Mammary epithelial cell (primary cell): ENCODE measurements at regions of chr1 and their contacts with region 1.

Region 1: DNA sequence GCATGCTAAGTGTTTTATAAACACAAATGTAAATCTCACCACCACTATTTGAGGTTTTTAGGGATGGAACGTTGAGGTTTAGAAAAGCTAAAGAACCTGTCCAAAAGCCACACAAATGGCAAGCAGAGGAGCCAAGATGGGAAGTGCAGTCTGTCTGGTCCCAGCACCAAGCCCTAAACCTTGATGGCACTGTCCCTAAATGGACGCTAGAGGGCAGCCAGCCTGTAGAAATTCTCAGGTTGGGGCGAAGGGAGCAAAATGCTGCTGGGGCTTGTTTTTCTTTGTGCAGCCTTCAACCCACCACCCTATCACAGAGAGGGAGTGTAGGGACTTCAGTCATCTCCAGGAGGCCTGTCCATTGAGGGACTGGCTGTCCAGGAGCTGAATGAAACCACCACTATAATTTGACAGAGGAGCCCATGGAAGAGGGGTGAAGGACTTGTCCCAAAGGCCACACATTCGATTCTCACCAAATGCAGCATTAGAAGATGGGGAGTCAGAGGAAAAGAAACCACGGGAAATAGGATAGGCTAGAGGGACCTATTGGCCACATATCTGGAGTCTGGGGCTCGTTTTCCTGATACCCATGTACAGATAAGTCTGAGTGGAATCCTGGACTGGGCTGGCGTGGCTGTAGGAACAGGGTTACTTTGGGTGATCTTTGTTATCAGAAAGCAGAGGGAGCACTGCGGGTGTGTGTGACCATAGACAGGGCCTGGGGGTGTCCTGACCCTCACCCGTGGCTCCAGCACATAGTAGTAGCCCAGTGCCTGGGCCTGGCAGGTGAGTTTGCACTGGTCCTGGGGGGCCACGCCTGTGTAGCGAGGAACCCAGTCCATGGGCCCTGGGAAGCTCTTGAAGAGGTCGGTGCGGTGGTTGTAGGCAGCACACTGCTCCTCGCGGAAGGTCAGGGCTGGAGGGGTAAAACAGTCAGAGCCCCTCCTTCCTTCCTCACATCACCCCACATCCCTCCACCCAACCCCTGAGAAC is 6.1 kb downstream of the ADAMTS4 start:
- DNase-seq: peak; percentile 48
- H3K4me3 ChIP-seq: no peak overlapping the region
- H3K27ac ChIP-seq: no peak overlapping the region
- H3K4me1 ChIP-seq: peaks cover 1% of the 10 kb centered on the region
- H3K27me3 ChIP-seq: no peaks in the 10 kb centered on the region
- CTCF ChIP-seq: peak; percentile 91 to 94

Region 2: GRCh38 chr1:161389691-161390558 is 197.2 kb after region 1 on chr1:
- CTCF ChIA-PET with region 1: no interaction called
- dilution Hi-C with region 1: no loop called
- in situ Hi-C with region 1: loop called in 1 of 2 experiments (anchors 10 kb)
- intact Hi-C with region 1: no loop called
- DNase-seq: peak; percentile 97
- H3K4me3 ChIP-seq: peak overlapping the region; percentile 56 to 91 (median 90)
- H3K27ac ChIP-seq: peak overlapping the region; percentile 83
- H3K4me1 ChIP-seq: peaks cover 14% of the 10 kb centered on the region
- H3K27me3 ChIP-seq: no peaks in the 10 kb centered on the region
- CTCF ChIP-seq: no peak